ENCODE measurements at regions of chr14 and their contacts with region 1.

Region 1: DNA sequence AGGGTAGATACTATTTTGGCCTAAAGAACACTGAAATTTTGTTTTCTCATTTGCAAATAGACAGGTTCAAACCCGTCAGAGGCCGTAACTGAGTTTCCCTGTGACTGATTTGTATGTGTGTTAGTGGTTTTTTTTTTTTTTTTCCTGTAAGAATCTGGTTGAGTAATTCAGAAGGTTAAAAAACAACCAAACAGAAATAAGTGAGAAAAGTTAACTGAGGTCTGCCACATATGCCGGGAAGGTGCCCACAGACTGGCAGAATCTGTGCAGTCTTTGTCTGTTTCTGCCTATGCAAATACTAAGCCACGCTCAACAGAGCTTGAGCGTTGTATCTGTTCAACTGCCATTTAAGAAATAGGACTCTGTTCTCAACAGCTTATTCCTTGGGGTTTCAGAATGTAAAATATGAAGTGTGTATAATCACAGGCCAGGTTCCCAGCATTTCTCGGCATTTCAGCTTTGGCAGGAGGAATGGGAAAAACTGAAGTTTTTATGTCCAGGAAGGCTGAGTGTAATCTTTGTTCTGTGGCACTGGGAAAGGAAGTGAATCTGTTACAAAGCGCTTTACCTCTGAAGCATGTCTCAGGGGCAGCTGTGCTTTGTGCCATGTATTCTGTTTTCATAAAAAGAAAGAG is 181.9 kb downstream of the PRKCH start:
- DNase-seq: peak; percentile 28 to 88 (median 64)
- ATAC-seq: peak; percentile 85
- H3K4me3 ChIP-seq: no peak overlapping the region
- H3K4me3 Mint-ChIP-seq: peak overlapping the region; percentile 71
- H3K27ac ChIP-seq: peak overlapping the region; percentile 28 to 61
- H3K27ac Mint-ChIP-seq: peak overlapping the region; percentile 98
- H3K4me1 ChIP-seq: peaks cover 97% of the 10 kb centered on the region
- H3K4me1 Mint-ChIP-seq: peaks cover 96% of the 10 kb centered on the region
- H3K27me3 ChIP-seq: no peaks in the 10 kb centered on the region
- H3K27me3 Mint-ChIP-seq: no peaks in the 10 kb centered on the region
- CTCF ChIP-seq: no peak

Region 2: DNA sequence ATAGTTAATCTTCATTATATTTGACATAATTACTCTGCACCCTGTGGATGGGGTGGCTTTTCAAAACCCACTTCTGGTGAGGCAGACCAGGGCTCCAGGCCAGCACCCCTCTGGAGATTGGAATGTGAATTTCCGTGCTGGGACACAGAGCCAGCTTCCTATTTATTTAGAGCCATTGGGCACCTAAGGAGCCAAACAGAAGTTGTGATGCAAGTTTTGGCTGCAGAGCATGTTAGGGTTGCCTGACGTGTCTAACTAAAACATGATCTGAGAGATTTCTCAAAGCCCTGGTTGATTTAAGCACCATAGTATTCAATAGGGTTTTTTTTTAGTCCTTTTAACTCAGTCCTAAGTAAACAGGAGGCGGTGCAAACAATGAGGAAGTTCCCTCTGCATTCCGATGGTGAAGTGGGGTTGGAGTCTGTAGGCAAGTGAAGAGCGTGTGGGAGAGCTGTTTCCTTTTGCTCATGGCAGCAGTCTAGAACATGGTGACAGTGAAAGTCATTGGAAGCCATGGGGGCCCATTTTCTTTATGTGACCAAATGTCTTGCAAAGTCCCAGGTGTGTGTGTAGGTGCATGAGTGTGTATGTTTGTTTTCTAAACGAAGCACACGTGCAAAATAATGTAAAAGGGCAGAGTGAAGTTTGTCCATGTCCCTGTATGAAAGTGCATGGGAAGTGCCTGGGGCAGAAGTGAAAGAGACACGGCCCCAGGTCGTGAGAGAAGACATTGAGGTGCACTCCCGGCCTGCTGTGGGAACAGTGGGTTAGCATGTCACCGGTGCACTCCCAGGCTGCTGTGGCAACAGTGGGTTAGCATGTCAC is 64.2 kb before region 1 on chr14:
- CTCF ChIA-PET with region 1: no interaction called
- POLR2A ChIA-PET with region 1: no interaction called
- intact Hi-C with region 1: no loop called
- DNase-seq: peak in 6 of 9 experiments; percentile 43 to 82 (median 59)
- ATAC-seq: peak; percentile 39
- H3K4me3 ChIP-seq: peak overlapping the region; percentile 19 to 34
- H3K4me3 Mint-ChIP-seq: peak overlapping the region; percentile 74
- H3K27ac ChIP-seq: peak overlapping the region; percentile 31 to 79
- H3K27ac Mint-ChIP-seq: peak overlapping the region; percentile 91
- H3K4me1 ChIP-seq: peaks cover 93% of the 10 kb centered on the region
- H3K4me1 Mint-ChIP-seq: peaks cover 91% of the 10 kb centered on the region
- H3K27me3 ChIP-seq: no peaks in the 10 kb centered on the region
- H3K27me3 Mint-ChIP-seq: no peaks in the 10 kb centered on the region
- CTCF ChIP-seq: no peak

Region 3: GRCh38 chr14:61489932-61490331 is 13.4 kb before region 1 on chr14:
- CTCF ChIA-PET with region 1: interaction called, 5 read pairs
- POLR2A ChIA-PET with region 1: interaction called, 5 read pairs
- intact Hi-C with region 1: loop called (anchors 1 to 2 kb)
- DNase-seq: no peak
- ATAC-seq: no peak
- H3K4me3 ChIP-seq: no peak overlapping the region
- H3K4me3 Mint-ChIP-seq: no peak overlapping the region
- H3K27ac ChIP-seq: peak overlapping the region in 1 of 2 experiments; percentile 42
- H3K27ac Mint-ChIP-seq: no peak overlapping the region
- H3K4me1 ChIP-seq: peaks cover 23% of the 10 kb centered on the region
- H3K4me1 Mint-ChIP-seq: peaks cover 42% of the 10 kb centered on the region
- H3K27me3 ChIP-seq: no peaks in the 10 kb centered on the region
- H3K27me3 Mint-ChIP-seq: no peaks in the 10 kb centered on the region
- CTCF ChIP-seq: no peak

Region 4: DNA sequence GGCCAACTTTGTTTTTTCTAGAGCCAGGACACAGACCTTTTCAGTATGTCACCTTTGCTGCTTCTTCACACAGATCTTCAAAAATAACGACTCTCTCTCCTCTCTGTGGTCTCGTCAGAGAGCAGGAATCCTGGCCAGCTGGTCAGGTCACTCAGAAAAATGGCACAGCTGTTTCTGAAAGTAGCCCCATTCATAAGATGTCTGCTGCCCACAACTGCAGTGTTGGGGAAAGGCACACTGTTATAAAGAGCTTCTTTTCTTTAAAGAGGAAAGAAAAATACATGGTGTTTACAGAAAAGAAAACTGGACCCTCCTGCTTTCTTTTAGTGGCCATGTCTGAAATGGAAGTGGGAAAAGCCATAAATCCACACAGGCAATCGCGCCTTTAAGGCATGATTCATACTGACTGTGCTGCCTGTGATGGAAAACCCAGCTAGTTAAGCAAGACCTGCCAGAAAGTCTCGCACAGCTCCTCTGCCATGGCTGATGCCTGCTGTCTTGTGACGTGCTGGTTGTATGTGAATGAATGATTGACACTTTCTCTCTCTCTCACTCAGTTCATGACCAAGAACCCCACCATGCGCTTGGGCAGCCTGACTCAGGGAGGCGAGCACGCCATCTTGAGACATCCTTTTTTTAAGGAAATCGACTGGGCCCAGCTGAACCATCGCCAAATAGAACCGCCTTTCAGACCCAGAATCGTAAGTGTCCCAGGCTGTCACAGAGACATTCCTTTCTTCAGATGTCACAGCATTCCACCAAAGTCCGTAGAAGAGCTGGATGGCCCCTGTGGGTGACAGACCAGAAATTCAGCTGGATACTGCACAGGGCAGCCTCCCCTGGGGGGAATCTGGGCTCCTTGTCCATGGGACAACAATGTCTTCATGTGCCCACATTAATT is 44.2 kb after region 1 on chr14:
- CTCF ChIA-PET with region 1: interaction called, 3 read pairs
- POLR2A ChIA-PET with region 1: interaction called, 4 read pairs
- intact Hi-C with region 1: loop called in 1 of 2 experiments (anchors 5 kb)
- DNase-seq: no peak
- ATAC-seq: no peak
- H3K4me3 ChIP-seq: no peak overlapping the region
- H3K4me3 Mint-ChIP-seq: no peak overlapping the region
- H3K27ac ChIP-seq: no peak overlapping the region
- H3K27ac Mint-ChIP-seq: peak overlapping the region; percentile 82
- H3K4me1 ChIP-seq: peaks cover 8% of the 10 kb centered on the region
- H3K4me1 Mint-ChIP-seq: peaks cover 33% of the 10 kb centered on the region
- H3K27me3 ChIP-seq: no peaks in the 10 kb centered on the region
- H3K27me3 Mint-ChIP-seq: no peaks in the 10 kb centered on the region
- CTCF ChIP-seq: no peak